ENCODE measurements at regions of chr9 and their contacts with region 1.

Region 1: GRCh38 chr9:21789541-21790037 is 12.8 kb upstream of the MTAP start:
- DNase-seq: peak in 1 of 2 donors; percentile 51
- ATAC-seq: peak in 7 of 8 donors; percentile 83 to 93 (median 88)
- H3K4me3 ChIP-seq: peak overlapping the region in 2 of 10 donors; percentile 17 to 19
- H3K27ac ChIP-seq: no peak overlapping the region
- H3K4me1 ChIP-seq: no peaks in the 10 kb centered on the region
- H3K27me3 ChIP-seq: peaks cover 0 to 51% (median 26%) of the 10 kb centered on the region in 7 donors
- CTCF ChIP-seq: peak; percentile 48 to 89 (median 80)

Region 2: DNA sequence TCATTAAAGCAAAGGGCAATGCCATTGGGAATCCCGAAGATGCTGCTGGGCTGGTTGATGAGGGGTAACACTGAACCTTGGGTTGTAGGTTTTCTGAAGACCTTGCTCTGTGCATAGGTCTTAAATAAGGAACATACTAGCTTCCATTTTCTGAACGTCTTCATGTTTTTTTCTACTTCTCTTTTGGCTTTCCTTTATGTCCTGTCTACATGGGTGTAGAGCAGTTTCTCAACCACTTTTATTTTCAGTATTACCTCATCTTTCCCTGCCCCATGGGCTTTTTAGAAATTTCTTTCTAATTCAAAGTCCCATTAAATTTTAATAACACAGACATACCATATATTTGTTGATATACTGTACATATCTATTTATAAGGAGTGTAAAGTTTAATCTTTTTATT is 549.7 kb before region 1 on chr9 and contains the start of gene IFNA14:
- intact Hi-C with region 1: loop called in 2 of 10 experiments (anchors 10 kb)
- DNase-seq: no peak
- ATAC-seq: no peak
- H3K4me3 ChIP-seq: no peak within 1 kb of the TSS
- H3K27ac ChIP-seq: no peak within 1 kb of the TSS
- H3K4me1 ChIP-seq: peaks cover 0 to 3% (median 0%) of the 10 kb centered on the region in 9 donors
- H3K27me3 ChIP-seq: peaks cover 0 to 43% (median 25%) of the 10 kb centered on the region in 7 donors
- CTCF ChIP-seq: no peak
- total RNA-seq, gene IFNA14: not detected

Region 3: GRCh38 chr9:21252721-21253547 is 536.7 kb before region 1 on chr9:
- intact Hi-C with region 1: loop called in 2 of 10 experiments (anchors 5 to 10 kb)
- DNase-seq: peak in 1 of 2 donors; percentile 32
- ATAC-seq: peak in 7 of 8 donors; percentile 64 to 87 (median 74)
- H3K4me3 ChIP-seq: peak overlapping the region in 1 of 10 donors; percentile 5
- H3K27ac ChIP-seq: no peak overlapping the region
- H3K4me1 ChIP-seq: peaks cover 0 to 20% (median 4%) of the 10 kb centered on the region in 9 donors
- H3K27me3 ChIP-seq: peaks cover 0 to 41% (median 8%) of the 10 kb centered on the region in 7 donors
- CTCF ChIP-seq: peak in 7 of 9 donors; percentile 39 to 62 (median 50)

Region 4: GRCh38 chr9:21294325-21294724 is 495.3 kb before region 1 on chr9:
- intact Hi-C with region 1: no loop called
- DNase-seq: no peak
- ATAC-seq: no peak
- H3K4me3 ChIP-seq: no peak overlapping the region
- H3K27ac ChIP-seq: no peak overlapping the region
- H3K4me1 ChIP-seq: peaks cover 0 to 11% (median 0%) of the 10 kb centered on the region in 9 donors
- H3K27me3 ChIP-seq: peaks cover 0 to 17% (median 0%) of the 10 kb centered on the region in 7 donors
- CTCF ChIP-seq: no peak

Region 5: GRCh38 chr9:21317956-21318923 is 471.3 kb before region 1 on chr9:
- intact Hi-C with region 1: loop called in 7 of 10 experiments (anchors 5 to 10 kb)
- DNase-seq: peak in 1 of 2 donors; percentile 34
- ATAC-seq: peak in 7 of 8 donors; percentile 46 to 80 (median 64)
- H3K4me3 ChIP-seq: no peak overlapping the region
- H3K27ac ChIP-seq: no peak overlapping the region
- H3K4me1 ChIP-seq: peaks cover 0 to 21% (median 0%) of the 10 kb centered on the region in 9 donors
- H3K27me3 ChIP-seq: no peaks in the 10 kb centered on the region
- CTCF ChIP-seq: peak; percentile 32 to 79 (median 69)

Region 6: DNA sequence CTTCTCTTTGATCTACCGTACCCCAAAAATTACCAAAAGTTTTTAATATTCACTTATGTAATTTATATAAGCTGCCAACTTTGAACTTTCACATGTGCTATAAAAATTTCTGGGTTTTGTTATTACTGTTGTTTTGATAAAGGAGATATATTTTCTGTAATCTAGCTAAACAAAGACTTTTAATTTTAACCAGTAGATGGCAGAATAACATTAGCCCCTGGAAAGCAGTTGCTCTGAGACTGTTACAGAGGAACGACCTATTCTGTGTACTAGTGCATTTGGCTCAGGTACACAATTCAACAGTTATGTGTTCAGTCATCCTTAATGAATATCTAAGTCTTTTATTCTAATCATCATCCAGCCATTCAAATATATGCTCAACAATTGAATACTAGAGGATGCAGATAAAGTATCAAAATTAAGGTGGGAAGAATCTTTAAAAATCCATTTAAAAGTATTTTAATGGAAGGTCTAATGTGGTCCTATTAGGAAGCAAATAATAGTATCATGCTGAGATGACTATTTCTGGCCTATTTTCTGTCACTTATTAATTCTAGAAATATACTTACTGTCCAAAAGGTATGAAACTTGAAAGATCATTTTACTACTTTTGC is 463.0 kb before region 1 on chr9:
- intact Hi-C with region 1: loop called in 7 of 10 experiments (anchors 2 to 10 kb)
- DNase-seq: no peak
- ATAC-seq: peak in 7 of 8 donors; percentile 52 to 78 (median 72)
- H3K4me3 ChIP-seq: no peak overlapping the region
- H3K27ac ChIP-seq: no peak overlapping the region
- H3K4me1 ChIP-seq: peaks cover 0 to 53% (median 37%) of the 10 kb centered on the region in 9 donors
- H3K27me3 ChIP-seq: no peaks in the 10 kb centered on the region
- CTCF ChIP-seq: peak; percentile 33 to 88 (median 74)

Region 7: GRCh38 chr9:21465859-21466518 is 323.6 kb before region 1 on chr9:
- intact Hi-C with region 1: loop called in 3 of 10 experiments (anchors 10 kb)
- DNase-seq: no peak
- ATAC-seq: no peak
- H3K4me3 ChIP-seq: no peak overlapping the region
- H3K27ac ChIP-seq: no peak overlapping the region
- H3K4me1 ChIP-seq: no peaks in the 10 kb centered on the region
- H3K27me3 ChIP-seq: peaks cover 0 to 12% (median 0%) of the 10 kb centered on the region in 7 donors
- CTCF ChIP-seq: peak in 7 of 9 donors; percentile 37 to 66 (median 54)

Measured in heart right ventricle (tissue), 16 donors.